GM10248 (cell line): ENCODE measurements at regions of chr11 and their contacts with region 1.

Region 1: GRCh38 chr11:122628810-122629555 is 26.5 kb upstream of the UBASH3B start:
- DNase-seq: peak; percentile 65
- CTCF ChIP-seq: peak; percentile 80

Region 2: GRCh38 chr11:122788781-122789535 is 160.0 kb after region 1 on chr11:
- CTCF ChIA-PET with region 1: interaction called, 150 read pairs
- POLR2A ChIA-PET with region 1: no interaction called
- DNase-seq: no peak
- CTCF ChIP-seq: no peak